ENCODE measurements at regions of chr6 and their contacts with region 1.

Region 1: GRCh38 chr6:20401205-20402091 is at the start of gene E2F3:
- DNase-seq: peak; percentile 100
- H3K4me3 ChIP-seq: peak within 1 kb of the TSS; percentile 74 to 95 (median 80)
- H3K27ac ChIP-seq: peak within 1 kb of the TSS; percentile 85
- H3K4me1 ChIP-seq: peaks cover 4% of the 10 kb centered on the region
- H3K27me3 ChIP-seq: no peaks in the 10 kb centered on the region
- CTCF ChIP-seq: no peak
- total RNA-seq, gene E2F3: 10.7 to 15.8 TPM

Region 2: DNA sequence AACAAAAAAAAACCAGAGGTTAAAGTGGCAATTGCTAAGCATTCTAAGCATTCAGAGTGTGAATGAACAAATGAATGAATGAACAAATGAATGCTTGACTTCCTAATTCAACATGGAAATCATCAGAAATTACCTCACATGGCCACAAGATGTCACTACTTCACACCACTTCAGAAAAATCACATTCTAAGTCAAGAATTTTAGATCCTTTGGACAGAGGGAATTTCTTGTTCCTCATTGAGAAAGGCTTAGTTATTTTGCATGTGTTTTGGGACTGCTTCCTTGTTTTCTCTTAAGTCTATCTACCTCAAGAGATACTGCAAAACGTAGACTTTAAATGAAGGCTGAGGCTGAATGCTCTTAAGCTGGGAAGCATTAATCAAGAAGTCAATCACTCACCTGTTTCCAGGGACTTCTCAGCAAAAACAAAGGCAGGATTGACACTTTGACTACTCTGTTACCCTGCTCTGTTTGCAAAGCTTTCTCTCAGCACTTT is 309.3 kb before region 1 on chr6:
- CTCF ChIA-PET with region 1: no interaction called
- dilution Hi-C with region 1: no loop called
- in situ Hi-C with region 1: no loop called
- intact Hi-C with region 1: loop called (anchors 10 kb)
- DNase-seq: peak; percentile 37
- H3K4me3 ChIP-seq: no peak overlapping the region
- H3K27ac ChIP-seq: no peak overlapping the region
- H3K4me1 ChIP-seq: no peaks in the 10 kb centered on the region
- H3K27me3 ChIP-seq: no peaks in the 10 kb centered on the region
- CTCF ChIP-seq: peak; percentile 53 to 62

Region 3: DNA sequence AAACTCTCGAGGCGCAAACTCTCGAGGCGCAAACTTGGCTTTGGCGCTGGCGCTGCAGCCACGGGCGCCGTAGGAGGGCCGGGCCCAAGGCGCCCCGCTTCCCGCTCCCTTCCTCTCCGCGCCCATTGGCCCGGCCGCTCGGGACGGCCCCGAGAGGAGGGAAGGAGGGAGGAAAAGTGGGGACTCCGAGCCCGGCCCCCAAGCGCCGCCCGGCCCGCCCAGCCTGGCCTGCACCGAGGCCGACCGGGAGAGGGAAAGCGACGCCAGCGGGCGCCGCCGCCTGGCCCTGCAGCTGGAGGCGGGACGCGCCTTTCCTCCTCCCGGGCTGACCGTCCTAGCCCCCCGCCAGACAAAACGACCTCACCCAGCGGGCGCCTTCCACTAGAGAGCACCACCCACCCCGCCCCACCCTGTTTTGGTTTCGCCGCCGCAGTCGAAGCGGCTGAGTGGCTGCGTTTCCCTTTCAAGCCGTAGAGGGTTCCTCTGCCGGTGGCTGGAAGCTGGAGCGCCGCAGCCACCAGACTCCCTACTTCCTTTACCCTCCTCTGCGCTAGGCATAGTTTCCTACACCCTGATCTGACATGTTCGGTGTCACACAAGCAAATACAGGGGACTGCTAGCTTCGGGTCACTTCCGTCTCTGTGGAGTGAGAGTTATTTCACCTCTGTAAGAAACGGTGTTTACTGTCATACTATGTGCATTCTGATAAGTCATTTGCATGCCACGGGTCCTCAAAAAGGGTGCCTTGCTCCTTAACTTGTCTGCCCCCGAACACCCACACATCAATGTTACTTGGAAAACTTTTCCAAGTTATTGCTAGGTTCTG is 188.8 kb before region 1 on chr6 and contains the start of gene MBOAT1:
- CTCF ChIA-PET with region 1: interaction called, 3 read pairs
- dilution Hi-C with region 1: no loop called
- in situ Hi-C with region 1: no loop called
- intact Hi-C with region 1: loop called (anchors 2 kb)
- DNase-seq: peak; percentile 96
- H3K4me3 ChIP-seq: peak within 1 kb of the TSS; percentile 65 to 80 (median 80)
- H3K27ac ChIP-seq: peak within 1 kb of the TSS; percentile 92
- H3K4me1 ChIP-seq: peaks cover 21% of the 10 kb centered on the region
- H3K27me3 ChIP-seq: no peaks in the 10 kb centered on the region
- CTCF ChIP-seq: peak in 1 of 2 donors; percentile 23
- total RNA-seq, gene MBOAT1: 2.3 to 8.2 TPM

Region 4: GRCh38 chr6:20291764-20292580 is 109.5 kb before region 1 on chr6:
- CTCF ChIA-PET with region 1: no interaction called
- dilution Hi-C with region 1: no loop called
- in situ Hi-C with region 1: no loop called
- intact Hi-C with region 1: loop called (anchors 1 kb)
- DNase-seq: peak; percentile 67
- H3K4me3 ChIP-seq: no peak overlapping the region
- H3K27ac ChIP-seq: no peak overlapping the region
- H3K4me1 ChIP-seq: no peaks in the 10 kb centered on the region
- H3K27me3 ChIP-seq: no peaks in the 10 kb centered on the region
- CTCF ChIP-seq: peak; percentile 80 to 89

Region 5: DNA sequence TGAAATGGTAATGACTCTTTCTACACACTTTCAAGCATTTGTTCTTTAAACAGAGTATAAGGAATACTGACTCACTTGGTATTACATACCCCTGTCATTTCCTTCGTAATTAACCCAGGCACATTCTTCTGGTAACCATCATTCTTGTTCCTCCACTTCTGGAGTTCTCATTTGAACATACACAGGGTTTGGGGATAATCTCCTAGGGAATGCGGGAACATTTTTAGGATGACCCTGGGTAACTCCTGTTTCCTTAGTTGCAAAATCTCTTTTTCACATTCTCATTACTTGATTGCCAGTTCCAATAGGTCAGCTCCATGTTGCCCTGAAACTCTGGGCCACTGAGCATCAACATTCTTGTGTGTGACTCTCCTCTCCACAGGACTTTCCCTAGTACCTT is 51.2 kb before region 1 on chr6:
- CTCF ChIA-PET with region 1: no interaction called
- dilution Hi-C with region 1: no loop called
- in situ Hi-C with region 1: no loop called
- intact Hi-C with region 1: no loop called
- DNase-seq: peak; percentile 35
- H3K4me3 ChIP-seq: no peak overlapping the region
- H3K27ac ChIP-seq: no peak overlapping the region
- H3K4me1 ChIP-seq: no peaks in the 10 kb centered on the region
- H3K27me3 ChIP-seq: no peaks in the 10 kb centered on the region
- CTCF ChIP-seq: no peak

Region 6: GRCh38 chr6:20534295-20535262 is 133.1 kb after region 1 on chr6 and contains the start of gene CDKAL1:
- CTCF ChIA-PET with region 1: interaction called, 4 read pairs
- dilution Hi-C with region 1: no loop called
- in situ Hi-C with region 1: loop called in 1 of 2 experiments (anchors 25 kb)
- intact Hi-C with region 1: no loop called
- DNase-seq: peak; percentile 88
- H3K4me3 ChIP-seq: peak within 1 kb of the TSS; percentile 57 to 94 (median 67)
- H3K27ac ChIP-seq: peak within 1 kb of the TSS; percentile 88
- H3K4me1 ChIP-seq: peaks cover 10% of the 10 kb centered on the region
- H3K27me3 ChIP-seq: no peaks in the 10 kb centered on the region
- CTCF ChIP-seq: no peak
- total RNA-seq, gene CDKAL1: 12.0 to 15.2 TPM

Region 7: DNA sequence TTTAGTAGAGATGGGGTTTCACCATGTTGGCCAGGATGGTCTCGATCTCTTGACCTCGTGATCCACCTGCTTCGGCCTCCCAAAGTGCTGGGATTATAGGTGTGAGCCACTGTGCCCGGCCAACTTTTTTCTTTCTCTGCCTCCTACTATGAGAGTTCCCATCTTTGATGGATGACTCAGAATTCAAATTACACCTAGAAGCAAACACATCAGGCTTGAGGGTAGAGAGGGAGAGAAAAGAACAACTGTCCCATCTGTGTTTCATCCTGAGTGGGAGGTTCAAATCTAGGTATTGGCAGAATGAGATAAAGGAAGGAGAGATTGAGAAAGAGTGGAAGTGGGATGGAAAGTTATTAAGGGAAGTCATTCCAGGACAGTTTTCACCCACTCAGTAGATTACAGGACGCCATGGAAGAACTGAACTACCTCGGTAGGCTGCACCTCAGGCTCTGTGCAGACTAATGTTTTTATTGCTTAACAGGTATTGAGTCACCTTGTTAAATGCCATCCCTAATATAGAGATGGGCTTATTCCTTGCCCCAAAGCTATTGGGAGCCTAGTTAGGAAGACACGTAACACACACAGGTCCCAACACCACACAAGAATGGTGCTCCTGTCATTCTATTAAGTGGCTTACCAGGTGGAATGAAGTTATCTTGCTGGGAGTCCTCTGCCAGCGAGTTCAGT is 1467.8 kb after region 1 on chr6:
- CTCF ChIA-PET with region 1: no interaction called
- dilution Hi-C with region 1: no loop called
- in situ Hi-C with region 1: no loop called
- intact Hi-C with region 1: loop called (anchors 5 kb)
- DNase-seq: peak; percentile 97
- H3K4me3 ChIP-seq: no peak overlapping the region
- H3K27ac ChIP-seq: peak overlapping the region; percentile 62
- H3K4me1 ChIP-seq: peaks cover 28% of the 10 kb centered on the region
- H3K27me3 ChIP-seq: no peaks in the 10 kb centered on the region
- CTCF ChIP-seq: no peak

Measured in mammary epithelial cell (primary cell).